Activated CD4-positive, alpha-beta memory T cell treated with anti-CD3 and anti-CD28 coated beads for 36 hours (primary cell): ENCODE measurements at regions of chr16 and their contacts with region 1.

Region 1: DNA sequence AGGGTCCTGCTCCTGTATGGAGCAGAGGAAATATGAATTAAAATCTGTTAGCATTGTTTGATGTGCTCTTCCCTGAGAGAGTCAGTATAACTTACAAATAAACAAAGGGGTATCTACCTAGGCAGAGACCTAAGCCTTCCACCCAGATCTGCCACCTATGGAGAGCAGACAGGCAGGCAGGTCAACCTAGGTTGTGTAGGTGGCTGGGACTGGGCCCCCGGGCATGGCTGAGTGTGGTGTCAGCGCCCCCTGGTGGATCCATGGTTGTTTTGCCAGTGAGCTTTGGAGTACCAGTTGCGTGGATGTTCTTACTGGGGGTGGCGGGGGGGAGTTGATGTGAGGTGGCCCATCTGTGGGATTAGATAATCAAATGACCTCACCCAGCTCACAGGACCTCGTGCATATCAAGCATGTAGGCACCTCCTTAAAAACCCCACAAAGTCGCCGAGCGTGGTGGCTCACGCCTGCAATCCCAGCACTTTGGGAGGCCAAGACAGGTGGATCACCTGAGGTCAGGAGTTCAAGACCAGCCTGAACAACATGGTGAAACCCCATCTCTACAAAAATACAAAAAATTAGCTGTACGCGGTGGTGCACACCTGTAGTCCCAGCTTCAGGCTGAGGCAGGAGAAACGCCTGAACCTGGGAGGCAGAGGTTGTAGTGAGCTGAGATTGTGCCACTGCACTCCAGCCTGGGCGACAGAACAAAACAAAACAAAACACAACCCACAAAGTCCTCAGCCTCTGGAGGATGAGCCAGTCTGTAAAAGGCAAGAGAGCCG is 17.6 kb downstream of the DUS2 start:
- DNase-seq: peak; percentile 94
- H3K4me3 Mint-ChIP-seq: no peak overlapping the region
- H3K27ac Mint-ChIP-seq: peak overlapping the region; percentile 65
- H3K4me1 Mint-ChIP-seq: peaks cover 6% of the 10 kb centered on the region
- H3K27me3 Mint-ChIP-seq: no peaks in the 10 kb centered on the region

Region 2: DNA sequence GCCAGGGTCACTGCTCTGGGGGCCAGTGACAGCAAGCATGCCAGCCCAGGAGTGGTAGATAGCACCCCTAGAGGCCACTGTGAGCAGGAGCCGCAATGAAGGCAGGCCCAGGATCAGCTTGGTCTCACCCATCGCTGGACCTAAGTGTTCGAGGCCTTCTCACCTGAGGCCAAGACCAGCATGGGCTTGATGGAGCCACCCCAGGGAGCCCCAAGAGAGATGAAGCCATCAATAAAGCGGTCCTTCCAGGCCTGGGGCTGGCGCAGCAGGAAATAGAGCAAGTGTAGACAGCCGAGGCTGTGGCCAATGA is 98.5 kb before region 1 on chr16:
- CTCF ChIA-PET with region 1: interaction called, 14 read pairs
- POLR2A ChIA-PET with region 1: no interaction called
- intact Hi-C with region 1: loop called (anchors 2 kb)
- DNase-seq: peak; percentile 50
- H3K4me3 Mint-ChIP-seq: no peak overlapping the region
- H3K27ac Mint-ChIP-seq: no peak overlapping the region
- H3K4me1 Mint-ChIP-seq: peaks cover 27% of the 10 kb centered on the region
- H3K27me3 Mint-ChIP-seq: no peaks in the 10 kb centered on the region

Region 3: GRCh38 chr16:67993189-67994039 is 47.3 kb before region 1 on chr16:
- CTCF ChIA-PET with region 1: interaction called, 19 read pairs
- POLR2A ChIA-PET with region 1: interaction called, 3 read pairs
- intact Hi-C with region 1: loop called (anchors 1 kb)
- DNase-seq: peak; percentile 90
- H3K4me3 Mint-ChIP-seq: peak overlapping the region; percentile 73
- H3K27ac Mint-ChIP-seq: peak overlapping the region; percentile 94
- H3K4me1 Mint-ChIP-seq: peaks cover 37% of the 10 kb centered on the region
- H3K27me3 Mint-ChIP-seq: no peaks in the 10 kb centered on the region

Region 4: GRCh38 chr16:68005786-68006286 is 34.9 kb before region 1 on chr16:
- CTCF ChIA-PET with region 1: interaction called, 14 read pairs
- POLR2A ChIA-PET with region 1: interaction called, 3 read pairs
- intact Hi-C with region 1: no loop called
- DNase-seq: peak; percentile 55
- H3K4me3 Mint-ChIP-seq: no peak overlapping the region
- H3K27ac Mint-ChIP-seq: peak overlapping the region; percentile 78
- H3K4me1 Mint-ChIP-seq: peaks cover 29% of the 10 kb centered on the region
- H3K27me3 Mint-ChIP-seq: no peaks in the 10 kb centered on the region

Region 5: DNA sequence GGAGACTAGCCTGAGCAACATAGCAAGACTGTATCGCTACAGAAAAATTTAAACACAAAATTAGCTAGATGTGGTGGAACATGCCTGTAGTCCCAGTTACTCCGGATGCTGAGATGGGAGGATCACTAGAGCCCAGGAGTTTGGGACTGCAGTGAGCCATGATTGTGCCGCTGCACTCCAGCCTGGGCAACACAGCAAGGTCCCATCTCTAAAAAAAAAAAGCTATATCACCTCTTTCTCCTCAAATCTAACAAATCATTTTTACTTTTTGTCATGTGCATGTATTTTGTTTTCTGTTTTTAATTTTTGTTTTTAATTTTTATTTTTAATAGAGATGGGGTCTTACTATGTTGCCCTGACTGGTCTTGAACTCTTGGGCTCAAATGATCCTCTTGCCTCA is 11.7 kb before region 1 on chr16:
- CTCF ChIA-PET with region 1: interaction called, 27 read pairs
- POLR2A ChIA-PET with region 1: no interaction called
- intact Hi-C with region 1: no loop called
- DNase-seq: no peak
- H3K4me3 Mint-ChIP-seq: no peak overlapping the region
- H3K27ac Mint-ChIP-seq: no peak overlapping the region
- H3K4me1 Mint-ChIP-seq: peaks cover 9% of the 10 kb centered on the region
- H3K27me3 Mint-ChIP-seq: no peaks in the 10 kb centered on the region

Region 6: GRCh38 chr16:68131813-68132706 is 91.4 kb after region 1 on chr16:
- CTCF ChIA-PET with region 1: no interaction called
- POLR2A ChIA-PET with region 1: no interaction called
- intact Hi-C with region 1: no loop called
- DNase-seq: no peak
- H3K4me3 Mint-ChIP-seq: no peak overlapping the region
- H3K27ac Mint-ChIP-seq: peak overlapping the region; percentile 54
- H3K4me1 Mint-ChIP-seq: peaks cover 54% of the 10 kb centered on the region
- H3K27me3 Mint-ChIP-seq: no peaks in the 10 kb centered on the region

Region 7: DNA sequence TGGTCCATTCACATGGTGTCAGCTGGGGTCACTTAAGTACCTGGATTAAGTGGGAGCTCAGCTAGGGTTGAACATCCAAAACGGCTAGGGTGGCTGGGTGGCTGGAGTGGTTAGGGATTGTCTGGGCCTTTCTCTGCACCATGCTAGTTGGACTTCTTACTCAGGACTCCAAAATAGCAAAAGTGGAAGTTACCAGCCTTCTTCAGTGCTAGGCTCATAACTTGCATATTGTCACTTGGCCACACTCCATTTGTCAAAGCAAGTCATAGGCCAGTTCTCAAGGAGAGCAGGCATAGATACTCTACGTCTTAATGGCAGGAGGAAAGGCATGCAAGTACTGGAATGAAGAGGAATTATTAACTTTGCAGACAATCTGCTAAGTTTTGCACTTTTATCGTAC is 125.6 kb after region 1 on chr16:
- CTCF ChIA-PET with region 1: no interaction called
- POLR2A ChIA-PET with region 1: no interaction called
- intact Hi-C with region 1: no loop called
- DNase-seq: no peak
- H3K4me3 Mint-ChIP-seq: no peak overlapping the region
- H3K27ac Mint-ChIP-seq: no peak overlapping the region
- H3K4me1 Mint-ChIP-seq: no peaks in the 10 kb centered on the region
- H3K27me3 Mint-ChIP-seq: no peaks in the 10 kb centered on the region

Region 8: DNA sequence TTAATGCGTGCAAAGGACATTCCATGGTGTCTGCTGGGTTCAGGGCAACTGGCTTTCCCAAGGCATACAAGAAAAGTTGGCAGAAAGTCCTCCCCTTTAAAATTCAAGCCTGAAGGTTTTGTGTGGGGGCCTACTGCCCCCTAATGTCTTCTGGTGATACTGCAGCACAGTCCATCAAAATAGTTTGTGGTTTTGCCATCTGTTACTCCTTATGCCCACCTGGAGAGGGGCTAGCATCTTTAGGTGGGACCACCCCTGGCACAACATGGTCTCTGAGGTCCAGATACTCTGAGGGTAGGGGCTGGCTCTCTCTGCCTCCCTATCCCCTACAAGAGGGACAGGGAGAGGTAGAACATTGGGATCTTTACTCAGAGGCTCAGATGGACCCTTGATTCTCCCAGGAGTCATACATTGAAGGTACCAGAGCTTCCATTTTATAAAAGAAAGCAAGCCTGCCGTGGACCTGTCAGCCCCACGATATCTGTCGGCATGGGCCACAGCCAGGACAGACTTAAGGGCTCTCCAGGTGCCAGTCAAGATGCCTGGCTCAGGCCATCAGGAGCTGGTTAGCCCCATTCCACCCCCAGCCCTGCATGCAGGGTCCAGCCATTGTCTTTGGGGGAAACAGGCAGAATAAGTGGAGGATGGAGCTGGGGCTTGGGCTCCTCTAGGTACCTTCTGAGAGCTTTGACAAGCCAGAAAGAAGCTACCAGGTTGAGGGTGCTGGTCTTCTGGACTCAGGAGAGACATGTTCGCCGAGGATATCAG is 188.9 kb after region 1 on chr16:
- CTCF ChIA-PET with region 1: interaction called, 11 read pairs
- POLR2A ChIA-PET with region 1: no interaction called
- intact Hi-C with region 1: no loop called
- DNase-seq: peak; percentile 62
- H3K4me3 Mint-ChIP-seq: no peak overlapping the region
- H3K27ac Mint-ChIP-seq: peak overlapping the region; percentile 43
- H3K4me1 Mint-ChIP-seq: peaks cover 37% of the 10 kb centered on the region
- H3K27me3 Mint-ChIP-seq: no peaks in the 10 kb centered on the region